IMR-90 (cell line): ENCODE measurements at regions of chr5 and their contacts with region 1.

Region 1: GRCh38 chr5:179023528-179024430 is at the start of gene ZNF879:
- DNase-seq: peak; percentile 94
- ATAC-seq: peak; percentile 99
- H3K4me3 ChIP-seq: peak within 1 kb of the TSS; percentile 73
- H3K27ac ChIP-seq: peak within 1 kb of the TSS; percentile 21
- H3K4me1 ChIP-seq: 0 out of 2 replicates have a peak, but pooled peaks cover 2% of the 10 kb centered on the region
- H3K27me3 ChIP-seq: no peaks in the 10 kb centered on the region
- CTCF ChIP-seq: no peak
- POLR2A ChIP-seq: no peak
- RAD21 ChIP-seq: no peak
- total RNA-seq, gene ZNF879: 3.3 and 3.4 TPM in 2 replicates

Region 2: DNA sequence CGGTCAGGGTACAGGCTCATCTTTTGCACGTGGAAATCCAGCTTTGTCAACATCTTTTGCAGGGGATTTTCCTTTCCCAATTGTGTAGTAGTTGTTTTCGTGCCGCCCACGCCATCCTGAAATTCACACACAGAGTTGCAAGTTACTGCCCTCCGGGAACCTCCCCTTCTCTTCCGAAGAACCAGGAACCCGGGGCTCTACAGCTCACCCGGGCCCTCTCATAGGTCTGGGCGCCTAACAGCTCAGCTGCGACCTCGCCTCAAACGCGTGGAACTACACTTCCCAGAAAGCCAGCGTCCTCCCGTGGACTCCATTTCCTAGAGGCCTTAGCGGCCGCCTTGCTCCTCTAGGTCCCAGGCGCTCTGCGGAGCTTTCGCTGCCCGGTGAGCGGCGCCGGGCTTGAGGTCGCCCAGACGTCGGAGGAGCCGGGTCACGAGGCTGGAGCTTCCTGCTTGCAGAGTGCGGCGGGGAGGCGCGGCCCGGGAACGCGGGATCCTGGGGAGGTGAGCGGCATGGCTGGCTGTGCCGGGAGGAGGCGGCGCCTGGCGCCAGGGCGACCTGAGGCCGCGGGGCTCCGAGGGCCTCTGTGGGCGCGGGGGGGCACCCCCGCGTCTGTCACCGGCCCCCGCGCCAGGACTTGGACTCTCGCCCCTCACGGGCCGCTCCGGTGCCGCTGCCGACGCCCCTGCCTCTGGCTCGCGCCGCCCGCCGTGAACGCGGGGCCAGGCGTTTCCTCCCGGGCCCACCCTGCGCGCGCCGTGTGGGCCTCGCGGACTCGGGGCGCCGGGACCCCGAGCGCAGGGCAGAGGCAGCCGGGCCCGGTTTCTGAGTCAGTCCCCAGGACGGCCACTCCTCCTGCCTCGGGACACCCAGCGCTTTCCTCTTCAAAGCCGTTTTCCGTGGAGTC is 163.9 kb before region 1 on chr5 and contains the start of gene ZNF354B:
- CTCF ChIA-PET with region 1: interaction called, 3 read pairs
- POLR2A ChIA-PET with region 1: no interaction called
- dilution Hi-C with region 1: no loop called
- in situ Hi-C with region 1: no loop called
- intact Hi-C with region 1: loop called (anchors 2 kb)
- DNase-seq: peak; percentile 92
- ATAC-seq: peak; percentile 97
- H3K4me3 ChIP-seq: peak within 1 kb of the TSS; percentile 73
- H3K27ac ChIP-seq: peak within 1 kb of the TSS; percentile 49
- H3K4me1 ChIP-seq: peaks cover 2% of the 10 kb centered on the region; the same call in 1 of the 2 replicates
- H3K27me3 ChIP-seq: no peaks in the 10 kb centered on the region
- CTCF ChIP-seq: 0 out of 2 replicates have a peak, but pooled peaks have one; percentile 7
- POLR2A ChIP-seq: peak; percentile 50; the same call in 1 of the 2 replicates
- RAD21 ChIP-seq: no peak
- total RNA-seq, gene ZNF354B: 5.0 TPM in 2 replicates

Region 3: GRCh38 chr5:178895651-178896571 is 127.9 kb before region 1 on chr5 and contains the start of gene ZFP2:
- CTCF ChIA-PET with region 1: no interaction called
- POLR2A ChIA-PET with region 1: no interaction called
- dilution Hi-C with region 1: no loop called
- in situ Hi-C with region 1: no loop called
- intact Hi-C with region 1: loop called (anchors 1 kb)
- DNase-seq: peak; percentile 27
- ATAC-seq: peak; percentile 98
- H3K4me3 ChIP-seq: peak within 1 kb of the TSS; percentile 57
- H3K27ac ChIP-seq: no peak within 1 kb of the TSS; the same call in 1 of the 2 replicates
- H3K4me1 ChIP-seq: no peaks in the 10 kb centered on the region
- H3K27me3 ChIP-seq: no peaks in the 10 kb centered on the region
- CTCF ChIP-seq: no peak
- POLR2A ChIP-seq: no peak
- RAD21 ChIP-seq: no peak
- total RNA-seq, gene ZFP2: 0.18 and 0.56 TPM in 2 replicates